GM10248 (cell line): ENCODE measurements at regions of chr6 and their contacts with region 1.

Region 1: DNA sequence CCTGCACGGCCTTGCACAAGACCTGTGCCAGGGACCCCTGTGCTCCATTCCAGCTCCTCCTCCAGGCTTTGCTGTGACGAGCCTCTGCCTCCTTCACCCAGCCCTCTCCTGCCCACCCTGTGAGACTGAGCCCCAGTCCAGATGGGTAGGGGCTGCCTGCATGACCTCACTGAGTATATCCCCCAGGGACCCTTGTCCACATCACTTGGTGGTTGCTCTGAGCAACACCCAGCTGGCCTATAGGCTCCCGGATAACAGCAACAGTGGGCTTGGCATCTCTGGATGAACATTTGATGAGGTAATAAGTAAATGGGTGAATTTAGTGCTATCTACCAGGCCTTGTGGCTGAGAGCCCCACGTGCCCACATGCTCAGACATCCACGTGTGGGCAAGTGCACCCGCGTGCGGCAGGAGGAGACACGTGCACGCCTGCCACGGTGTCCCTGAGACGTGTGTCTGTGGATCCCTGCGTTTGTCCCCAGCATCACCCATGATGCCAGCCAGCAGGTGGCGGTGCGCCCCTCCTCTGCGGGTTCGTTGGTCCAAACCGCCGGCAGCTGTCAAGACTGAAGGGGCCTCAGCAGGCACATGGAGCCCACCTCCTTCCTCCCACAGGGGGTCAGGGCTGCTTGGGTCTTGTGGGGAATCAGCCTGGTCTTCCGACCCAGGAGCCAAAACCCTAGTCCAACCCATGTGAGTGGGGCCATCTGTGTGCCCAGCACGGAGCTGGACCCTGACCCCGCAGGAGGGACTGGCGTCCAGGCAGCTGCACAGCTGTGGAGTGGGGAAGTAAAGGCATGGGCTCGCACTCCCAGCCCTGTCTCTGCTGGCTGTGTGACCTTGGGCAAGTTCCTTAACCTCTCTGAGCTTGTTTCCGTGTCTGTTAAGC is 45.9 kb downstream of the FGD2 start:
- DNase-seq: peak; percentile 88
- CTCF ChIP-seq: peak; percentile 92

Region 2: GRCh38 chr6:36563237-36563927 is 488.0 kb before region 1 on chr6:
- CTCF ChIA-PET with region 1: no interaction called
- POLR2A ChIA-PET with region 1: no interaction called
- DNase-seq: no peak
- CTCF ChIP-seq: no peak

Region 3: DNA sequence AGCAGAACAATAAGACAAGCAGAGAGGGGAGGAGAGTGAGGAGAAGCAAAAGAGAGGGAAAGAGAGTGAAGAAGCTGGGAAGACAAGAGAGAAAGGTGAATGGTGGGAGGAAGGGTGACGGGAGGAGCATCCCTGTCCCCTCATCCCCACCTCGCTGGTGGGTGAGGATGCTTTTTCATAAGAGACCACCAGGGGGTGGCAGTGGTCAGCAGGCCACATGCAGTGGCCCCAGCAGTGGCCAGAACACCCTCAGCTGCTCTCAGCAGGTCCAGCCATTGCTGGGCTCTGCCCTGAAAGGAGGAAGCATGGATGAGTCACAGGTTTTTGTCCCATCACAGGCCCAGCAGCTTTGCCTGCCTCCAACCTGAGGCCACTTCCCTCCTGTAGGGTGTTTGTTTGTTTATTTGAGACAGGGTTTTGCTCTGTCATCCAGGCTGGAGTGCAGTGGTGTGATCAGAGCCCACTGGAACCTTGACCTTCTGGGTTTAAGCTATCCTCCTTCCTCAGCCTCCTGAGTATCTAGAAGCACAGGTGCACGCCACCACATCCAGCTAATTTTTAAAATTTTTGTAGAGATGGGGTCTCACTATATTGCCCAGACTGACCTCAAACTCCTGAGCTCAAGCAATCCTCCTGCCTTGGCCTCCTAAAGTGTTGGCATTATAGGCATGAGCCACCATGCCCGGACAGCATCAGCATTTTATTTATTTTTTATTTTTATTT is 22.0 kb before region 1 on chr6:
- CTCF ChIA-PET with region 1: interaction called, 101 read pairs
- POLR2A ChIA-PET with region 1: interaction called, 3 read pairs
- DNase-seq: peak; percentile 73
- CTCF ChIP-seq: peak; percentile 79

Region 4: GRCh38 chr6:37102279-37103168 is 51.1 kb after region 1 on chr6:
- CTCF ChIA-PET with region 1: interaction called, 14 read pairs
- POLR2A ChIA-PET with region 1: no interaction called
- DNase-seq: peak; percentile 75
- CTCF ChIP-seq: no peak

Region 5: DNA sequence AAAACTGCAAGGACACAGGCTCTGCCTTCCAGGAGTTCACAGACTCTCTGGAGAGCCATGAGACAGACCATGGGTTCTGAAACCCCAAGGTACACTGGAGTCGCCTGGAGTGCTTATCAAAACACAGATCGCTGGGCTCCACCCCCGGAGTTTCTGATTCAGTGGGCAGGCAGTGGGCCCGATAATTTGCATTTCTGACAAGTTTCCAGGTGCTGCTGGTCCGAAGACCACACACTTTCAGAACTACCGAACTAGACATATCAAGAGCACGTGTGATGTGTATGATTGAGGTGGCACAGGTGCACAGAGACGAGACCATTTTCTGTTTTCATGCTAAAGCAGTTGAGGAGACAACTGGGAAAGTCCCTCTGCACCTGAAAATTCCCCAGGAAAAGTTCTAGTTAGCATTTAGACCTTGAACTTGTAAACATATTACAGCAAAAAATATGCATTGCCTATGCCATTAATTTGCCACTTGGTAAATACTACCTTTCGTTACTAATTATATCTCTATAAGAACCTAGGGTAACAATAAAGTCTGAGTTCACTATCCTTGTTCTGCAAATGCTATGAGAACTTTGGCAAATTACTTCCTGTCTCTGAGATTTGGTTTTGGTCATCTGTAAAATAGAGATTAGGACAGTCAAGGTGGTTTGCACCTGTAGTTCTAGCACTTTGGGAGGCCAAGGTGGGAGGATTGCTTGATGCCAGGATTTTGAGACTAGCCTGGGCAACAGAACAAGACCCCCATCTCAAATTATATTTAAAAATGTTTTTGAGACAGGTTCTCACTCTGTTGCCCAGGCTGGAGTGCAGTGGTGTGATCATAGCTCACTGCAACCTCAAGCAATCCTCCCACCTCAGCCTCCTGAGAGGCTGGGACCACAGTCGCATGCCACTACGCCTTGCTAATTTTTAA is 104.3 kb after region 1 on chr6:
- CTCF ChIA-PET with region 1: interaction called, 15 read pairs
- POLR2A ChIA-PET with region 1: no interaction called
- DNase-seq: peak; percentile 81
- CTCF ChIP-seq: no peak

Region 6: GRCh38 chr6:37160922-37161778 is 109.8 kb after region 1 on chr6:
- CTCF ChIA-PET with region 1: interaction called, 12 read pairs
- POLR2A ChIA-PET with region 1: no interaction called
- DNase-seq: peak; percentile 63
- CTCF ChIP-seq: no peak

Region 7: DNA sequence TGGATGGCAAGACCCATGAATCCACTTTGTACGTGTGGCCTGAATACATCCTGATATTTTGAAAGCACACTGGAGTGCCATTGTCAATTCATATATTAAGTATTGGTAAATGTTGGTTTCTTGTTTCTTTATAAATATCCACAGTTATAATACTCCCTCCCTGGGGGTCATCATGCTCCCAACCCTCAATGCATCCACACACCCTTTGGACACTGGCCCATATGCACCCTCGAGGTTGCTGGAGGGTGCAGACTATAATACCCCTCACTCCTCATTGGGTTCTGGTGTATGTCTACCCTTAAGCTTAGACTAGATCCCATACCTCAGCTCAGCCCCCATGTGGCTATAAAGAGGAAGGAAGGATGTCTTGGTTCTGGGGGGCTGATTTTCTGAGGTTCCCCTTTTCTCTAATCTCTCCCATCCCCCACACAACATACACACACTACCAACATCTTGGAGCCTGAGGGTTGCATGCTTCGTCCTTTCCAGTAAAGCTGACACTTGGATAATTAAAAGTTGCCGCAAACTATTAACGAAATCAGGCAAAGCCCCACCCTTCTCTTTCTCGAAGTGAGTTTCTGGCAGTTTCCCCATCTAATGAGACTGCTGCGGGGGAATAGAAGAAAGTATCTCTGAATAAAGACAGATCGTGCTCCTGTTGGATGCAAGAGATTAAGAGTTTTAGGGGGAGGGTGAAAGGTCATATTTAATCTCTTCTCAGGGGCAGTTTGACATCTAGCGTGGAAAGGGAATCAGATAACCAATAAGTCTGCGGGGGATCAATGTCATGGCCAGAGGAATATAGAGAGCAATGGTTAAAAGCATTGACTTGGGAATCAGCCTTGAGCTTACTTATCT is 125.9 kb after region 1 on chr6:
- CTCF ChIA-PET with region 1: interaction called, 151 read pairs
- POLR2A ChIA-PET with region 1: interaction called, 9 read pairs
- DNase-seq: no peak
- CTCF ChIP-seq: no peak

Region 8: DNA sequence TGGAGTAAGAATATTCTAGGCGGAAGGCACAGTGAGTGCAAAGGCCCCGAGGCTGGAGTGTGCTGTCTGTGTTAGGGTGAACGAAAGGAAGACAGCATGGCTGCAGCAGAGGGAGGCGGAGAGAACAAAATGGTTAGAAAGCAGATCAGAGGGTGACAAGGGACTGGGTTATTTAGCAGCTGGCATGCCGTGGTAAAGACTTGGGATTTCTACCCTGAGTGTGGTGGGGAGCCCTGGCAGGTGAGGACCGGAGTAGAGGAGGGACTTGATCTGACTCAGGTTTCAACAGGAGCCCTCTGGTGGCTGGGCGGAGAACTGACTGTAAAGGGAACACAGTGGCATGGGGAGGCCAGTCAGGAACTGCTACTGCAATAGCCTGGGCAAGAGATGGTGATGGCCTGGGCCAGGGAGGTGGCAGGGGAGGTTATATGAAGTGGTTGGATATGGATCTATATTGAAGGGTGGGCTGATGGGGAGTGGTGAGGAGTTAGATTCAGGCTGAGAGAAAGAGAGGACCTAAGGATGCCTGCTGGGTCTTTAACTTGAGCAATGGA is 156.6 kb after region 1 on chr6:
- CTCF ChIA-PET with region 1: interaction called, 68 read pairs
- POLR2A ChIA-PET with region 1: interaction called, 4 read pairs
- DNase-seq: peak; percentile 81
- CTCF ChIP-seq: peak; percentile 62

Region 9: GRCh38 chr6:37303932-37304363 is 252.6 kb after region 1 on chr6:
- CTCF ChIA-PET with region 1: no interaction called
- POLR2A ChIA-PET with region 1: no interaction called
- DNase-seq: peak; percentile 44
- CTCF ChIP-seq: peak; percentile 61